ENCODE measurements at regions of chr15 and their contacts with region 1.

Region 1: GRCh38 chr15:74382004-74382816 is 14.8 kb upstream of the CYP11A1 start:
- DNase-seq: peak; percentile 86 to 89
- ATAC-seq: peak; percentile 89 to 96 (median 93)
- H3K4me3 ChIP-seq: no peak overlapping the region
- H3K27ac ChIP-seq: no peak overlapping the region
- H3K4me1 ChIP-seq: no peaks in the 10 kb centered on the region
- H3K27me3 ChIP-seq: no peaks in the 10 kb centered on the region
- CTCF ChIP-seq: peak; percentile 95

Region 2: DNA sequence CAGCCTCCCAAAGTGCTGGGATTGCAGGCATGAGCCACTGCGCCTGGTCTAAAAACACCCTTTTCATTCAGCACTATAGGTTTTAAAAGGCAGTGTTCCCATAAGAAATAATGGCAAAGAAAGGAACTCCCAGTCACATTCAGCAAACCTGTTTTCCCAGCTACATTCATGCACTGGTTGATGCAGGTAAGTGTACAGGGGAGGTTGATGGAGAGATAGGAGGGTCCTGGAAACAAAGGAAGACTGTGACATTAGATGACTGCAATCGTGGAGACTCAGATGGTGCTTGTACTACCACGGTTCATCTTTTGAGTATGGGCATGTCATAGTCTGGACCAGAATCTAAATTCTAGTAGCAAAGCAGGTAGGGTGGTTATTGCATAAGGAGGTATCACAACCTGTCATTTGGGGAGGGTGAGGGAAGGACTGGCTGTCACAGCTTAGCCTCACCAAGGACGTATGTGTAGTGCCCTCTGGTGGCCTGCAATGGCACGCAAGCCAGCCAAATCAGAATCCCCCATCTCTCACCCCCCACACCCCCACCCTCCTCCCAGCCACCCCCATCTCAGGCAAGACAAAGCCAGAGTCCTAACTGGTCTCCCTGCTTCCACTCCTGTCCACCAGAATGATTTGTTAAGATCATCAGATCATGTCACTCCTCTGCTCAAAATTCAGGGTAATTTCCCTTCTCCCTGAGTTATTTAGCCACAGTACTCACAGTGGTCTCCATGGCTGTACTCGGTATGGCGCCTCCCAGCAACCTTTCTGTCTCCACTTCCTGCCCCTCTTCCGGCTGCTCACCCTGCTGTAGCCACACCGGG is 107.5 kb after region 1 on chr15:
- intact Hi-C with region 1: loop called (anchors 2 to 5 kb)
- DNase-seq: peak; percentile 40 to 68
- ATAC-seq: peak; percentile 64 to 86 (median 80)
- H3K4me3 ChIP-seq: no peak overlapping the region
- H3K27ac ChIP-seq: no peak overlapping the region
- H3K4me1 ChIP-seq: no peaks in the 10 kb centered on the region
- H3K27me3 ChIP-seq: no peaks in the 10 kb centered on the region
- CTCF ChIP-seq: peak; percentile 65

Region 3: DNA sequence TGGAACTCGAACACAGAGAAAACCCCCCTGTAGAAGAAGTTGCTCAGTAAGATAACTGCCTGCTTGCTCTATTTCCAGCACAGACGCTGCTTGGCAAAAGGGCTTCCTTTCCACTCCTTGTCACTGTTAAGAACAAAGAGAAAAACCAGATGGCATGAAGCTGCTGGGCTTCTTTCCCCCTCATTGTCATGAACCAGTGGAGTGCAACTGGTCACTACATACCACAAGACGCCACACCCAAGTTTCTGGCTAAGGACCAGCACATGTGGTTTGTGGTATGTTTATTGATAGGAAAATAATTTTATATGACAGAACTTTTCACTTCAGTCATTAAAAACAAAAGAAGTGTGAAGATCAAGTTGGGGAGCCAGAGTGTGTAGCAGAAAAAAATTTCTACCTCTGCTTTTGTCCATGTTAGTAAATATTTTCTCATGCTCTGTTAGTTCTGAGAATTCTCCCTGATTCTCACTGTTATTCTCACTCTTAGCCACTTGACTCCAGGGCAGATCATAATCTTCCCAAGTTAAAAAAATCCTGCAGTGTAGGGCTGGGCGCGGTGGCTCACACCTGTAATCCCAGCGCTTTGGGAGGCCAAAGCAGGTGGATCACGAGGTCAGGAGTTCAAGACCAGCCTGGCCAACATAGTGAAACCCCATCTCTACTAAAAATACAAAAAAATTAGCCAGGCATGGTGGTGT is 271.4 kb after region 1 on chr15:
- intact Hi-C with region 1: no loop called
- DNase-seq: no peak
- ATAC-seq: peak in 1 of 4 donors; percentile 31
- H3K4me3 ChIP-seq: no peak overlapping the region
- H3K27ac ChIP-seq: peak overlapping the region; percentile 82
- H3K4me1 ChIP-seq: peaks cover 55% of the 10 kb centered on the region
- H3K27me3 ChIP-seq: no peaks in the 10 kb centered on the region
- CTCF ChIP-seq: no peak